GM23248 (cell line): ENCODE measurements at regions of chr7 and their contacts with region 1.

Region 1: DNA sequence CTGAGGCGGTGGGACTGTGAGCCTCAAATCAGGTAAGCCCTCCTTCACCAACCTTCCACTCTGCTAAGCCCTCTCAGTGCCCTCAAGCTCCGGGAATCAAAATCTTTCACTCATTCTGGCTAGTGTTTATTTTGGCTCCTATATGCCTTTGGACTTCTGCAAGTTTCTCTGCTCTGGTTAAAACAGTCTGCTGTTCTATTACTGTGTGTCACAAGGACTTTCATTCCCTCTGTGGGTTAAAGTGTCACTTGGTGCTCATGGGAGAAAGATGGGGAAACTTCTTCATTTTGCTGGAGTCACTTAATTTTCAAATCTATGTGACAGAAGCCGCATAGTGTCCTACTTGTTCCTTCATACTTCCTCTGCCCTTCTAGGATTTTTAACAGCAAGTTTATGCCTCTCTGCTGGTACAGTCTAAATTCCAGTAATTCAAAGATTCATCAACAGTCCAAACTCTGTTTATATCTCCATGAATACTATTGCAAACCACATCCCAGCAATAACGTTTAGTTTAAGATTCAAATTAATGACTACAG is 61.3 kb downstream of the CD36 start:
- DNase-seq: peak; percentile 33
- H3K4me3 ChIP-seq: no peak overlapping the region
- H3K27ac ChIP-seq: no peak overlapping the region
- H3K4me1 ChIP-seq: peaks cover 29% of the 10 kb centered on the region
- H3K27me3 ChIP-seq: no peaks in the 10 kb centered on the region

Region 2: GRCh38 chr7:80918909-80919662 is 219.3 kb after region 1 on chr7 and contains the start of gene SEMA3C:
- in situ Hi-C with region 1: loop called (anchors 10 kb)
- DNase-seq: peak; percentile 99
- H3K4me3 ChIP-seq: peak within 1 kb of the TSS; percentile 99
- H3K27ac ChIP-seq: peak within 1 kb of the TSS; percentile 60
- H3K4me1 ChIP-seq: peaks cover 24% of the 10 kb centered on the region
- H3K27me3 ChIP-seq: no peaks in the 10 kb centered on the region
- total RNA-seq, gene SEMA3C: 612 and 756 TPM in 2 replicates

Region 3: GRCh38 chr7:81457852-81458522 is 758.2 kb after region 1 on chr7:
- in situ Hi-C with region 1: loop called (anchors 5 kb)
- DNase-seq: peak; percentile 77
- H3K4me3 ChIP-seq: no peak overlapping the region
- H3K27ac ChIP-seq: no peak overlapping the region
- H3K4me1 ChIP-seq: peaks cover 7% of the 10 kb centered on the region; the same call in 1 of the 2 replicates
- H3K27me3 ChIP-seq: no peaks in the 10 kb centered on the region